ENCODE measurements at regions of chr1 and their contacts with region 1.

Region 1: DNA sequence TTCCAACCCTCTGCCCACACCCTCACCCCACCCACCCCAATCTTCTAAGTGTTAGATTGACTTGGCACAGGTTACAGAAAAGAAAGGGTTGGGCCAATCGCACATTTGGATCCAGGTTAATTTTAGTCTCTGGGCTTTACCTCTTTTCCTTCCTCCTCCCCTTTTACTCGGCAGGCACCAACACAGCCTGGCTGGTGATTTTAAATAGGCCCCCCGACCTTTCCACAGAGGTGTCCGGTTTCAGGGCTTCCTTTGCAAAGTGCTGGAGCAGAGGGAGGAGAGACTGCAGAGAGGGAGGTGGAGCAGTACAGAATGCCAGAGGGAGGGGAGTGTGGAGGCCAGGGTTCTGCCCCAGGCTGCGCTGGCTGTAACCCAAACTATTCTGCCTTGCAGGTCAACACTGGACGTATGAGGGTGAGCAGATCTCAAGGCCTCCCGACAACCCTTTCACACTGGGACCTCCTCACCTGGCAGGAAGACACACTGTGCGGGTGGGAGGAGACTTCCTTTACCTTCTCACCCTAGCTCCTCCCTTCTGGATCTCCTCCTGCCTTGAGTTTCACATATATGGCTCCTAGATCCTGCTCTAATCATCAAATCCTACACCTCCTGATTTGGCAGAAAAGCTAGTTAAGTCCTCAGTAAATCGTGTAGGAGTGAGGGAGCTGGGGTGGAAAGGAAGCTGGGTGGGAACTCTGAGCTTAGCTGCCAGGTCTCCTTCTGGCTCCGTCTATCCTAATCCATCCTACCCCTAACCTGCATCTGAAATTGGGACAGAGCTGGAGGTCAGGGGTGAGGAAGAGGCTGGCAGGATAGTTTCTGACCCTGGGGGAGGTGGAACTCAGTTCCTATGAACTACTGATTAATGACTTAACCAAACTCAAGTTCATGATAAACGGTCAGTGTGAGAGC is 2.4 kb downstream of the CA14 start:
- DNase-seq: no peak
- H3K4me3 ChIP-seq: no peak overlapping the region
- H3K4me3 Mint-ChIP-seq: no peak overlapping the region
- H3K27ac ChIP-seq: no peak overlapping the region
- H3K27ac Mint-ChIP-seq: peak overlapping the region in 1 of 7 donors; percentile 36
- H3K4me1 ChIP-seq: peaks cover 15% of the 10 kb centered on the region
- H3K4me1 Mint-ChIP-seq: peaks cover 8 to 25% (median 13%) of the 10 kb centered on the region in 4 donors
- H3K27me3 ChIP-seq: peaks cover 27% of the 10 kb centered on the region
- H3K27me3 Mint-ChIP-seq: peaks cover 19 to 24% of the 10 kb centered on the region in 2 donors

Region 2: GRCh38 chr1:149927503-149928387 is 332.3 kb before region 1 on chr1 and contains the start of gene SF3B4:
- CTCF ChIA-PET with region 1: no interaction called
- POLR2A ChIA-PET with region 1: no interaction called
- intact Hi-C with region 1: no loop called
- DNase-seq: peak; percentile 93 to 97 (median 94)
- H3K4me3 ChIP-seq: peak within 1 kb of the TSS; percentile 80 to 86
- H3K4me3 Mint-ChIP-seq: peak within 1 kb of the TSS; percentile 90 to 98 (median 96)
- H3K27ac ChIP-seq: peak within 1 kb of the TSS; percentile 87
- H3K27ac Mint-ChIP-seq: peak within 1 kb of the TSS; percentile 95 to 98 (median 97)
- H3K4me1 ChIP-seq: peaks cover 40% of the 10 kb centered on the region
- H3K4me1 Mint-ChIP-seq: peaks cover 28 to 53% (median 41%) of the 10 kb centered on the region in 4 donors
- H3K27me3 ChIP-seq: no peaks in the 10 kb centered on the region
- H3K27me3 Mint-ChIP-seq: peaks cover 3% of the 10 kb centered on the region in 2 donors
- total RNA-seq, gene SF3B4: 47.7 to 48.8 TPM

Region 3: GRCh38 chr1:150106341-150106740 is 153.7 kb before region 1 on chr1:
- CTCF ChIA-PET with region 1: no interaction called
- POLR2A ChIA-PET with region 1: no interaction called
- intact Hi-C with region 1: no loop called
- DNase-seq: peak; percentile 58 to 72 (median 66)
- H3K4me3 ChIP-seq: no peak overlapping the region
- H3K4me3 Mint-ChIP-seq: peak overlapping the region; percentile 71 to 90 (median 86)
- H3K27ac ChIP-seq: peak overlapping the region; percentile 25
- H3K27ac Mint-ChIP-seq: peak overlapping the region; percentile 92 to 98 (median 94)
- H3K4me1 ChIP-seq: peaks cover 83% of the 10 kb centered on the region
- H3K4me1 Mint-ChIP-seq: peaks cover 64 to 92% (median 75%) of the 10 kb centered on the region in 4 donors
- H3K27me3 ChIP-seq: no peaks in the 10 kb centered on the region
- H3K27me3 Mint-ChIP-seq: no peaks in the 10 kb centered on the region

Region 4: GRCh38 chr1:150281837-150282653 is 22.0 kb after region 1 on chr1 and contains the start of gene CIART:
- CTCF ChIA-PET with region 1: interaction called, 45 read pairs
- POLR2A ChIA-PET with region 1: interaction called, 5 read pairs
- intact Hi-C with region 1: loop called (anchors 1 kb)
- DNase-seq: peak; percentile 81 to 89 (median 88)
- H3K4me3 ChIP-seq: peak within 1 kb of the TSS; percentile 61 to 80
- H3K4me3 Mint-ChIP-seq: peak within 1 kb of the TSS; percentile 83 to 97 (median 89)
- H3K27ac ChIP-seq: peak within 1 kb of the TSS; percentile 57
- H3K27ac Mint-ChIP-seq: peak within 1 kb of the TSS; percentile 87 to 98 (median 96)
- H3K4me1 ChIP-seq: peaks cover 23% of the 10 kb centered on the region
- H3K4me1 Mint-ChIP-seq: peaks cover 15 to 27% (median 24%) of the 10 kb centered on the region in 4 donors
- H3K27me3 ChIP-seq: no peaks in the 10 kb centered on the region
- H3K27me3 Mint-ChIP-seq: no peaks in the 10 kb centered on the region
- total RNA-seq, gene CIART: 0.67 to 0.94 TPM

Region 5: GRCh38 chr1:150429805-150430204 is 169.8 kb after region 1 on chr1:
- CTCF ChIA-PET with region 1: interaction called, 8 read pairs
- POLR2A ChIA-PET with region 1: no interaction called
- intact Hi-C with region 1: loop called (anchors 2 kb)
- DNase-seq: peak in 4 of 5 donors; percentile 10 to 26 (median 12)
- H3K4me3 ChIP-seq: no peak overlapping the region
- H3K4me3 Mint-ChIP-seq: no peak overlapping the region
- H3K27ac ChIP-seq: no peak overlapping the region
- H3K27ac Mint-ChIP-seq: peak overlapping the region in 5 of 7 donors; percentile 4 to 81 (median 75)
- H3K4me1 ChIP-seq: no peaks in the 10 kb centered on the region
- H3K4me1 Mint-ChIP-seq: peaks cover 6 to 16% (median 11%) of the 10 kb centered on the region in 4 donors
- H3K27me3 ChIP-seq: no peaks in the 10 kb centered on the region
- H3K27me3 Mint-ChIP-seq: no peaks in the 10 kb centered on the region

Region 6: GRCh38 chr1:150515328-150516048 is 255.5 kb after region 1 on chr1 and contains the start of gene FALEC:
- CTCF ChIA-PET with region 1: interaction called, 12 read pairs
- POLR2A ChIA-PET with region 1: no interaction called
- intact Hi-C with region 1: no loop called
- DNase-seq: peak; percentile 87 to 91 (median 89)
- H3K4me3 ChIP-seq: peak within 1 kb of the TSS; percentile 69 to 73
- H3K4me3 Mint-ChIP-seq: peak within 1 kb of the TSS; percentile 83 to 94 (median 92)
- H3K27ac ChIP-seq: peak within 1 kb of the TSS; percentile 53
- H3K27ac Mint-ChIP-seq: peak within 1 kb of the TSS; percentile 61 to 93 (median 89)
- H3K4me1 ChIP-seq: peaks cover 11% of the 10 kb centered on the region
- H3K4me1 Mint-ChIP-seq: peaks cover 8 to 20% (median 12%) of the 10 kb centered on the region in 4 donors
- H3K27me3 ChIP-seq: no peaks in the 10 kb centered on the region
- H3K27me3 Mint-ChIP-seq: no peaks in the 10 kb centered on the region
- total RNA-seq, gene FALEC: 0.64 TPM in 1 of 2 experiments, not detected in the other

Region 7: DNA sequence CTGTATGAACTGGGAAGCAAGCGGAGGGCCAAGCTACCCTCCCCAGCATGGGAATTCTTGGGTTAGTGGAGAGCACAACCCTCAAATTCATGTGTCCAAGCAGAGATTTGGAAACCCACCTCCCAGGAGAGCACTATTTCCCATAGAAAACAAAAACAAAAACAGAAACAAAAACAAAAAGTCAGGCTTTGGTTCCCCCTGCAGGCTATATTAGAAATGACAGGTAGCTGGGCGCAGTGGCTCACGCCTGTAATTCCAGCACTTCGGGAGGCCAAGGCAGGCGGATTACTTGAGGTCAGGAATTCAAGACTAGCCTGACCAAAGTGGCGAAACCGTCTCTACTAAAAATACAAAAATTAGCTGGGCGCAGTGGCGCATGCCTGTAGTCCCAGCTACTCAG is 735.9 kb after region 1 on chr1:
- CTCF ChIA-PET with region 1: interaction called, 9 read pairs
- POLR2A ChIA-PET with region 1: no interaction called
- intact Hi-C with region 1: loop called (anchors 5 kb)
- DNase-seq: peak in 3 of 5 donors; percentile 32 to 39 (median 38)
- H3K4me3 ChIP-seq: no peak overlapping the region
- H3K4me3 Mint-ChIP-seq: peak overlapping the region in 3 of 8 donors; percentile 10 to 57 (median 25)
- H3K27ac ChIP-seq: peak overlapping the region; percentile 10
- H3K27ac Mint-ChIP-seq: peak overlapping the region in 6 of 7 donors; percentile 70 to 89 (median 80)
- H3K4me1 ChIP-seq: peaks cover 12% of the 10 kb centered on the region
- H3K4me1 Mint-ChIP-seq: peaks cover 3 to 20% (median 13%) of the 10 kb centered on the region in 4 donors
- H3K27me3 ChIP-seq: no peaks in the 10 kb centered on the region
- H3K27me3 Mint-ChIP-seq: no peaks in the 10 kb centered on the region